GM10248 (cell line): ENCODE measurements at regions of chr1 and their contacts with region 1.

Region 1: DNA sequence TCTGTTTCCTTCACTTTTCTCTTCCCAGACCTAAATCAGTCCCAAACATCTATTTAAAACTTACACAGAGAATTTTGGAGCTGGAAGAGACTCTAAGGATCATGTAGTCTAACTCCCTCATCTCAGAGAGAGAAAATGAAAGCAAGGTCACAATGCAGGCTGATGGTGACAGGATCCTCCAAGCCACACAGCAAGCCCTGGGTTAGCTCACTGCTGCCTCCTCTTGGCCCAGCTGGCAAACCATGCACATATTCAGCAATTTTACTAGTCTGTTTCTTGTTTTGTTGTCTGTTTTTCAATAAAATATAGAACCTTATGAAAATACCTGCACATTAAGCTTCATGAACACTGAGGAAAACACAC is 27.7 kb upstream of the LY9 start:
- DNase-seq: peak; percentile 77
- CTCF ChIP-seq: peak; percentile 93

Region 2: GRCh38 chr1:160675641-160676410 is 92.5 kb before region 1 on chr1:
- CTCF ChIA-PET with region 1: interaction called, 30 read pairs
- POLR2A ChIA-PET with region 1: interaction called, 3 read pairs
- DNase-seq: peak; percentile 67
- CTCF ChIP-seq: peak; percentile 90

Region 3: DNA sequence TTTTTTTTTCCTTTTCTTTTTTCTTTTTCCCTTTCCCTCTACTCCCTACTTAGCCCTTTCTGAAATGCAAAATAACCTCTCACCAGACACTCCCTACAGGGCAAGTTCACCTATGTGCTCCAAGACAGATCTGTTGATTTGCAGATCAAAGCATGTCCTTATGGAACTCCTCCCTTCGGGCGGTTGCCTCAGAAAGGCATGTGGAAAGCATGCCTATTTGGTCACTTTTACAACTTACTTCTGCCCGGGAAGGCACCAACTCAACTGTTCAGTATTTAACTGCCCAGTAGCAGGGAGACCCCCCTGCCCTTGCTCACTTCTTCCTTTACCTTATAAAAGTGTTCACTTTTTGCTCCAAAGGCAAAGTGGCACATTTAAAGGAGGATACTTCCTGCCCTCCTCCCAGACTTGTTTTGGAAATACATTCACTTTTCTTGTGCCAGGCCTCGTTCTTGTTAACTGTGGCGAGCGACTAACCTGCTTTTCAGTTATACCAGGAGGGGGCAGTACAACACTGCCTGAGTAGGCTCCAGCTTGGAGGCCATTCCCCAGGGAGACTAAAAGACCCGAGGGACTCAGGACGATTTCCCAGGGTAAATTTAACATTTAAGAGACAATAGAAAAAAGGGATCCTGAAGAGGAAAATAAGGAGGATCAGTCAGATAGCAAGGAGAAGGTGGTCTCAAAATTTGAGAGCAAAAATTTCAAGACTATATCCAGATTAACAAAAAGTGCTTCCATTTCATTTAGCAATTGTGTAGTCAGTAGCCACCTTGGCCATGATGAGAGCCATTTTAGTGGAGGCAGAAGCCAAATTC is 41.6 kb before region 1 on chr1:
- CTCF ChIA-PET with region 1: interaction called, 69 read pairs
- POLR2A ChIA-PET with region 1: no interaction called
- DNase-seq: peak; percentile 62
- CTCF ChIP-seq: peak; percentile 80

Region 4: GRCh38 chr1:160748181-160748877 is 19.9 kb before region 1 on chr1:
- CTCF ChIA-PET with region 1: interaction called, 67 read pairs
- POLR2A ChIA-PET with region 1: interaction called, 4 read pairs
- DNase-seq: no peak
- CTCF ChIP-seq: peak; percentile 37

Region 5: GRCh38 chr1:160789702-160790611 is 21.7 kb after region 1 on chr1:
- CTCF ChIA-PET with region 1: interaction called, 30 read pairs
- POLR2A ChIA-PET with region 1: no interaction called
- DNase-seq: peak; percentile 75
- CTCF ChIP-seq: no peak

Region 6: GRCh38 chr1:160830321-160831153 is 62.3 kb after region 1 on chr1:
- CTCF ChIA-PET with region 1: interaction called, 81 read pairs
- POLR2A ChIA-PET with region 1: no interaction called
- DNase-seq: peak; percentile 65
- CTCF ChIP-seq: peak; percentile 72

Region 7: GRCh38 chr1:160855181-160855981 is 87.1 kb after region 1 on chr1:
- CTCF ChIA-PET with region 1: no interaction called
- POLR2A ChIA-PET with region 1: no interaction called
- DNase-seq: peak; percentile 53
- CTCF ChIP-seq: no peak

Region 8: DNA sequence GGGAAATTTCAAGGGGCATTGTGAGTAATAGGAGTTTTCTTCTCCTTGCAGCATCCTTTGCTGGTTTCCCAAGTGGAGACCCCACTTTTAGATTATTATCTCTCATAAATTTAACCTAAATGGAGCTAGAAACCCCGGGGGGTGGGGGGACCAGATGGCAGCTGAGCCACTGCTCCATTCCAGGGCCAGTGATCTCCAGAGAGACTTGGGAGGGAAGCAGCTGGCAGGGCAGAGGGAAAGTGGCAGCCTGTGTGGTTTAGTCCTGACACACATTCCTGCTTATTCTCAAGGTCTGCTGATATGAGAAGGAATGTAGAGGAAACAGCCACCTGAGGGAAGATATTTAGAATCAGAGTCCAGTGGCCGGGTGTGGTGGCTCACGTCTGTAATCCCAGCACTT is 506.6 kb after region 1 on chr1:
- CTCF ChIA-PET with region 1: no interaction called
- POLR2A ChIA-PET with region 1: no interaction called
- DNase-seq: no peak
- CTCF ChIP-seq: no peak